ENCODE measurements at regions of chr19 and their contacts with region 1.

Region 1: GRCh38 chr19:13150187-13150930 is at the starts of genes IER2 and STX10:
- DNase-seq: peak; percentile 88
- ATAC-seq: peak; percentile 45
- H3K4me3 Mint-ChIP-seq: peak within 1 kb of the TSS; percentile 99
- H3K27ac Mint-ChIP-seq: peak within 1 kb of the TSS; percentile 99
- H3K4me1 Mint-ChIP-seq: peaks cover 40% of the 10 kb centered on the region
- H3K27me3 Mint-ChIP-seq: no peaks in the 10 kb centered on the region
- CTCF ChIP-seq: no peak
- total RNA-seq, gene IER2: 116 and 119 TPM in 2 replicates
- total RNA-seq, gene STX10: 41.7 and 43.6 TPM in 2 replicates

Region 2: GRCh38 chr19:12789904-12790619 is 360.3 kb before region 1 on chr19:
- CTCF ChIA-PET with region 1: no interaction called
- POLR2A ChIA-PET with region 1: interaction called, 8 read pairs
- intact Hi-C with region 1: loop called (anchors 2 kb)
- DNase-seq: peak; percentile 95
- ATAC-seq: peak; percentile 43
- H3K4me3 Mint-ChIP-seq: peak overlapping the region; percentile 96
- H3K27ac Mint-ChIP-seq: peak overlapping the region; percentile 97
- H3K4me1 Mint-ChIP-seq: peaks cover 52% of the 10 kb centered on the region
- H3K27me3 Mint-ChIP-seq: no peaks in the 10 kb centered on the region
- CTCF ChIP-seq: no peak

Region 3: DNA sequence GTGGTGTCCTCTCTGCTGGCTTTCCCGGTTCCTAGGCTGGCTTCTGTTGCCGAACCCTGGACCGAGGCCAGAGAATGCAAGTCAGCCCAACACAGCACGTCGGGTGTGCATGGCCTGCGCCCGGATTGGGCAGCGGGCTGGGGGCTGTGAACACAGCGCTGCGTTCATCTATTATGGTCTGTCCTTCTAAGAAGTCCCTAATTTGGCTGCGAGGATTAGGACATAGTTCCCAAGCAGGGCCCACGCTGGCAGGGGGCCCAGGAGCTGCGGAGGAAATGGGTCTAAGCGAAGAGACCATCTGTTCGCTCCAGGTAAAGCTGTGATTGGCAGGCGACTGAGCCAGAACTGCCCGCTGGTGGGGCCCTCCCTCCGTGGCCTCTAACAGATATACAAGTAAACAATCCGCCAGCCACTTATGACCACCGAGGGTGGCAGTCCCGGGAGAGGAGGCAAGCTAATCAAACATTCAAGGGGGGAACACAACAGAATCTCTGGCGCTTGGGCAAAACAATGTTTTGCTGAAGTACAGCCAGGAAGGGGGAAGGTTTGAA is 237.3 kb before region 1 on chr19:
- CTCF ChIA-PET with region 1: no interaction called
- POLR2A ChIA-PET with region 1: no interaction called
- intact Hi-C with region 1: no loop called
- DNase-seq: no peak
- ATAC-seq: no peak
- H3K4me3 Mint-ChIP-seq: no peak overlapping the region
- H3K27ac Mint-ChIP-seq: no peak overlapping the region
- H3K4me1 Mint-ChIP-seq: peaks cover 12% of the 10 kb centered on the region
- H3K27me3 Mint-ChIP-seq: no peaks in the 10 kb centered on the region
- CTCF ChIP-seq: no peak

Region 4: DNA sequence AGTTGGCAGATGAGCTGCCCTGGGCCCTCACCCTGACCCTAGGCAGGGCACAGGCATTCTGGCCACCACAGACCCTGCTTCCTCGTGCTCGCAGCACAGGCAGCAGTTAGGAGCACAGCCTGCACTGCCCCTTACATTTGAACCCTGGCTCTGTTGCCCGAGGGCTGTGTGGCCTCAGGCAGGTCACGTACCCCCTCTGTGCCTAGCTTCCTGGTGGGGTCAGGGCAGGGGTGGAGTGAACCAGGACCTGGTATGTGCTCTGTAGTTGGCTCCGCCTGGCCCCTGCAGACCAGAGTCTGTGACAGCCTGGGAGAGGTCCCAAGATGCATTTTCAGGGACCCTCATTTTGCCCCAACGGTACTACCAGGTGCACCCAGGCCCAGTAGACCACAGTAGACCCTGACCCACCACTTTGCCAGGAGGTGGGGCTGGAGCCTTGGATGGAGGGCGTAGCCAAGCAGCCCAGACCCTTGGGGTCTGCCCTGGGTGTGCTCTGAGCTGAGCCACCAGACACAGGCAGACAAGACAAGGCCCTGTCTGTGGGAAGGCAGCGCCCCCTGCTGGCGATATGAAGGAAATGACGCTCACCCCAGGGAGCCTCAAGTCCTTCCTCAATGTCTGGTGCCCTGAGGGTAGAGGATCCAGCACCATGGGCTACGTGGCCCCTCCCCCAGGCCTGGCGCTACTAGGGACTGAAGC is 56.8 kb before region 1 on chr19:
- CTCF ChIA-PET with region 1: interaction called, 4 read pairs
- POLR2A ChIA-PET with region 1: interaction called, 62 read pairs
- intact Hi-C with region 1: no loop called
- DNase-seq: peak; percentile 73
- ATAC-seq: peak; percentile 56
- H3K4me3 Mint-ChIP-seq: peak overlapping the region; percentile 29
- H3K27ac Mint-ChIP-seq: peak overlapping the region; percentile 95
- H3K4me1 Mint-ChIP-seq: peaks cover 36% of the 10 kb centered on the region
- H3K27me3 Mint-ChIP-seq: no peaks in the 10 kb centered on the region
- CTCF ChIP-seq: peak; percentile 71

Region 5: GRCh38 chr19:13162518-13163314 is 12.4 kb after region 1 on chr19:
- CTCF ChIA-PET with region 1: interaction called, 38 read pairs
- POLR2A ChIA-PET with region 1: interaction called, 413 read pairs
- intact Hi-C with region 1: loop called (anchors 1 kb)
- DNase-seq: peak; percentile 70
- ATAC-seq: peak; percentile 36
- H3K4me3 Mint-ChIP-seq: peak overlapping the region; percentile 84
- H3K27ac Mint-ChIP-seq: peak overlapping the region; percentile 89
- H3K4me1 Mint-ChIP-seq: peaks cover 87% of the 10 kb centered on the region
- H3K27me3 Mint-ChIP-seq: no peaks in the 10 kb centered on the region
- CTCF ChIP-seq: no peak

Region 6: DNA sequence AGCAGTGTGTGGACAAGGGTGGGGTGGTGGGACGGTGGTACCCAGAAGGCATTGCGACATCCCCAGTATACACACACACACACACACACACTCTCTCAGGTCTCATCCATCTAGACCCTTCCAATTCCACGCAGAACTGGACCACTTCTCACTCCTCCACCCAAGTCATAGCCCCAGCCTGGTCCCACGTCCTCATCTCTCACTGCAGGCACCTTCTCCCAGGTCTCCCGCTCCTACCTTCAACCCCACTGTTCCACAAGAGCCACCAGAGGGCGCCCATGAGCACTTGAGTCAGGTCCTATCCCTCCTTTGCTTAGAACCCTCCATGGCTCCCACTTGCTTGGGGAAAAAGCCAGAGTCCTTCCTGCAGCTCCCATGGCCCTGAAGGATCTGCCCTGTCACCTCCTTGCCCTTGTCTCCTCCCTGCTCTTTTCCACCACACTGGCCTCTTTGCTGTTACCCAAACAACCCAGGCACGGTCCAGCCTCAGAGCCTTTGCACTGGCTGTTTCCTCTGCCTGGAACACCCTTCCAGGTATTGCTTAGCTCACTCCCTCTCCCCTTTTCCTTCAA is 62.5 kb after region 1 on chr19:
- CTCF ChIA-PET with region 1: interaction called, 3 read pairs
- POLR2A ChIA-PET with region 1: interaction called, 28 read pairs
- intact Hi-C with region 1: no loop called
- DNase-seq: peak; percentile 60
- ATAC-seq: no peak
- H3K4me3 Mint-ChIP-seq: no peak overlapping the region
- H3K27ac Mint-ChIP-seq: no peak overlapping the region
- H3K4me1 Mint-ChIP-seq: peaks cover 66% of the 10 kb centered on the region
- H3K27me3 Mint-ChIP-seq: no peaks in the 10 kb centered on the region
- CTCF ChIP-seq: no peak

Region 7: GRCh38 chr19:14006243-14006765 is 855.9 kb after region 1 on chr19 and contains the start of gene RFX1:
- CTCF ChIA-PET with region 1: no interaction called
- POLR2A ChIA-PET with region 1: interaction called, 4 read pairs
- intact Hi-C with region 1: loop called (anchors 10 kb)
- DNase-seq: peak; percentile 100
- ATAC-seq: peak; percentile 74
- H3K4me3 Mint-ChIP-seq: peak within 1 kb of the TSS; percentile 94
- H3K27ac Mint-ChIP-seq: peak within 1 kb of the TSS; percentile 98
- H3K4me1 Mint-ChIP-seq: peaks cover 48% of the 10 kb centered on the region
- H3K27me3 Mint-ChIP-seq: no peaks in the 10 kb centered on the region
- CTCF ChIP-seq: no peak
- total RNA-seq, gene RFX1: 19.0 and 19.9 TPM in 2 replicates

Measured in activated B cell treated with CpG ODN at 0.5 μM for 24 hours (primary cell).